B cell (primary cell): ENCODE measurements at regions of chr15 and their contacts with region 1.

Region 1: DNA sequence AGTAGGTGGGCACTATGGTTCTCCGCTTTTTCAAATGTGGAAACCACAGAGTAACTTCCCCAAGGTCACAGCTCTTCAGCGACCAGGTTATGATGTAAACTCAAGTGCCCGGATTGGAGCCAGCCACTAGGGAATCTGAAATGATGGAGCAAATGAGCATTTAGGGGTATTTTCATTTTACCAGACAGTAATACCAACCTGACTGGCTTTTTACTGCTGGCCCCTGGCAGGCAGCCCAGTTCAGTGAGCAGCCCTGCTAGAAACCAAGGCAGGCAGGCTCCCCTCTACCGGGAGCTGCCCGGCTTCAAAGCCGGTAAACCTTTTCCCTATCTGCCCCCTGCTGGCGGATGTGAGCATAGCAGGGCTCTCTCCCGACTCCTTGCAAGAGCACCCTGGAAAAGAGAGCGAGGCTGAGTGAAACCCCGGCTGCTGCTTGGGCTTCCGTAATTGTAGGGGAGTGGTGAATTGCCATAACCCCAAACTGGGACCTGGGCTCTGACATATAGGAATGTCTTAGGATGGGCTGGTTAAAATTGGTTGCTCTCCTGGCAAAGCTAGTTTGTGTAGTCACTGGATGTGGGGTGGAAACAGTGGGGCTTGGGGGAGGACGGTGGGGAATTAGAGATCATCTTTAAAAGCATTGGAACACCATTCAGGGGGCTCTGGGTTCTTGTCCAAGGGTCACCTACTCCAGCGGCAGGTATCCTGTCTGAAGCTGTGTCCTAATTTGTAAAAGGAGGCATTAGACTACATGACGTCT is 98.0 kb upstream of the TNFAIP8L3 start:
- DNase-seq: peak; percentile 69
- ATAC-seq: peak; percentile 39
- H3K4me3 ChIP-seq: no peak overlapping the region
- H3K4me3 Mint-ChIP-seq: no peak overlapping the region
- H3K27ac ChIP-seq: no peak overlapping the region
- H3K27ac Mint-ChIP-seq: no peak overlapping the region
- H3K4me1 ChIP-seq: peaks cover 0 to 5% of the 10 kb centered on the region in 2 donors
- H3K4me1 Mint-ChIP-seq: no peaks in the 10 kb centered on the region
- H3K27me3 ChIP-seq: peaks cover 0 to 19% (median 4%) of the 10 kb centered on the region in 4 experiments
- H3K27me3 Mint-ChIP-seq: peaks cover 44% of the 10 kb centered on the region
- CTCF ChIP-seq: peak; percentile 91

Region 2: GRCh38 chr15:51181905-51182304 is 10.8 kb before region 1 on chr15:
- CTCF ChIA-PET with region 1: interaction called, 15 read pairs
- POLR2A ChIA-PET with region 1: no interaction called
- intact Hi-C with region 1: no loop called
- DNase-seq: no peak
- ATAC-seq: no peak
- H3K4me3 ChIP-seq: no peak overlapping the region
- H3K4me3 Mint-ChIP-seq: no peak overlapping the region
- H3K27ac ChIP-seq: no peak overlapping the region
- H3K27ac Mint-ChIP-seq: no peak overlapping the region
- H3K4me1 ChIP-seq: no peaks in the 10 kb centered on the region
- H3K4me1 Mint-ChIP-seq: no peaks in the 10 kb centered on the region
- H3K27me3 ChIP-seq: peaks cover 0 to 3% (median 0%) of the 10 kb centered on the region in 4 experiments
- H3K27me3 Mint-ChIP-seq: peaks cover 25% of the 10 kb centered on the region
- CTCF ChIP-seq: no peak

Region 3: GRCh38 chr15:51203797-51204196 is 11.1 kb after region 1 on chr15:
- CTCF ChIA-PET with region 1: interaction called, 14 read pairs
- POLR2A ChIA-PET with region 1: no interaction called
- intact Hi-C with region 1: no loop called
- DNase-seq: no peak
- ATAC-seq: no peak
- H3K4me3 ChIP-seq: no peak overlapping the region
- H3K4me3 Mint-ChIP-seq: no peak overlapping the region
- H3K27ac ChIP-seq: no peak overlapping the region
- H3K27ac Mint-ChIP-seq: no peak overlapping the region
- H3K4me1 ChIP-seq: no peaks in the 10 kb centered on the region
- H3K4me1 Mint-ChIP-seq: no peaks in the 10 kb centered on the region
- H3K27me3 ChIP-seq: peaks cover 0 to 6% (median 3%) of the 10 kb centered on the region in 4 experiments
- H3K27me3 Mint-ChIP-seq: peaks cover 26% of the 10 kb centered on the region
- CTCF ChIP-seq: no peak